ENCODE measurements at regions of chr2 and their contacts with region 1.

Region 1: GRCh38 chr2:64865073-64865830 is 123.9 kb upstream of the SLC1A4 start:
- DNase-seq: peak; percentile 76
- H3K4me3 ChIP-seq: peak overlapping the region; percentile 68 to 77
- H3K27ac ChIP-seq: peak overlapping the region; percentile 32 to 83
- H3K4me1 ChIP-seq: peaks cover 10% of the 10 kb centered on the region
- H3K27me3 ChIP-seq: no peaks in the 10 kb centered on the region
- CTCF ChIP-seq: peak; percentile 94 to 97 (median 95)
- POLR2A ChIP-seq: no peak

Region 2: GRCh38 chr2:63628403-63628942 is 1236.8 kb before region 1 on chr2:
- intact Hi-C with region 1: no loop called
- DNase-seq: no peak
- H3K4me3 ChIP-seq: no peak overlapping the region
- H3K27ac ChIP-seq: no peak overlapping the region
- H3K4me1 ChIP-seq: no peaks in the 10 kb centered on the region
- H3K27me3 ChIP-seq: no peaks in the 10 kb centered on the region
- CTCF ChIP-seq: no peak
- POLR2A ChIP-seq: no peak

Region 3: GRCh38 chr2:64538764-64539433 is 326.4 kb before region 1 on chr2:
- intact Hi-C with region 1: no loop called
- DNase-seq: no peak
- H3K4me3 ChIP-seq: no peak overlapping the region
- H3K27ac ChIP-seq: no peak overlapping the region
- H3K4me1 ChIP-seq: no peaks in the 10 kb centered on the region
- H3K27me3 ChIP-seq: no peaks in the 10 kb centered on the region
- CTCF ChIP-seq: no peak
- POLR2A ChIP-seq: no peak

Region 4: GRCh38 chr2:64594226-64594989 is 270.8 kb before region 1 on chr2:
- intact Hi-C with region 1: loop called (anchors 5 kb)
- DNase-seq: no peak
- H3K4me3 ChIP-seq: no peak overlapping the region
- H3K27ac ChIP-seq: no peak overlapping the region
- H3K4me1 ChIP-seq: peaks cover 3% of the 10 kb centered on the region
- H3K27me3 ChIP-seq: no peaks in the 10 kb centered on the region
- CTCF ChIP-seq: no peak
- POLR2A ChIP-seq: no peak

Region 5: DNA sequence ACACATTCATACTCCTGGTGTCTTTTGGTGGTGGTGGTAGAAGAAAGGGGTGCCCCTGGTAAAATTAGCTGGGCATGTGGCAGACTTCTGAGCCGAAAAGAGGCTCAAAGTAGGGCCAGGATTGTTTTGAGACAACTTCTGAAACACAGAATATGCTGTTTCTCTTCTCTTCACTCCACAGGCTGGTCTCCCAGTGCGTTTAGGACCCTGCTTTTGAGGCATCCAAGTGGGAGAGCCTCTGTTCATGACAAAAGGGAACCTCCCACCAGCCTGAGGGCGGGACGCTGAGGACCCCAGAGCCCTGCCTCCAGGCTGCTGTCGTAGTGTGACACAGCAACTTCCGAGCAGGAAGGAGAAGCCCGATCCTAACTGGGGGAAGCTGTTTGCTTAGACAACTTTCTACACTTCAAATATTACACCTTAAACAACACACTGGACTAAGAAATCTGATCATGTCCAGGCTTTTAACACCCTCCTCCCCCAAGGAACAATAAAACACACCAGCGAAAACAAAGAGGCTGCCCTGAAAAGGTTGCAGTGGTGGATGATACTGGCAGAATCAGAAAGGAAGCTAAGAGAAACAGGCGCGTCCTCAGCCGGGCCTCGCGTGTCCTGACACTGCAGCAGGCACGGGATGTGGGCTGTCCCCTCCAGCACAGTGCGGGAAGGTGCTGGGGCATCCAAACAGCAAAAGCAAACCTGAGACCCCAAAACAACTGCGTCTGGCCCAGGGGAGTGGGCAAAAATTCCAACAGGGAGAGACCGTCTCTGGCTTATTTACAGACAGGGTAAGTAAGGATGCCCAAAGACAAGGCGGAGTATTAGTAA is 220.9 kb before region 1 on chr2:
- intact Hi-C with region 1: loop called (anchors 5 kb)
- DNase-seq: peak; percentile 90
- H3K4me3 ChIP-seq: peak overlapping the region; percentile 29 to 52
- H3K27ac ChIP-seq: peak overlapping the region; percentile 89 to 95
- H3K4me1 ChIP-seq: peaks cover 75% of the 10 kb centered on the region
- H3K27me3 ChIP-seq: no peaks in the 10 kb centered on the region
- CTCF ChIP-seq: no peak
- POLR2A ChIP-seq: no peak

Region 6: DNA sequence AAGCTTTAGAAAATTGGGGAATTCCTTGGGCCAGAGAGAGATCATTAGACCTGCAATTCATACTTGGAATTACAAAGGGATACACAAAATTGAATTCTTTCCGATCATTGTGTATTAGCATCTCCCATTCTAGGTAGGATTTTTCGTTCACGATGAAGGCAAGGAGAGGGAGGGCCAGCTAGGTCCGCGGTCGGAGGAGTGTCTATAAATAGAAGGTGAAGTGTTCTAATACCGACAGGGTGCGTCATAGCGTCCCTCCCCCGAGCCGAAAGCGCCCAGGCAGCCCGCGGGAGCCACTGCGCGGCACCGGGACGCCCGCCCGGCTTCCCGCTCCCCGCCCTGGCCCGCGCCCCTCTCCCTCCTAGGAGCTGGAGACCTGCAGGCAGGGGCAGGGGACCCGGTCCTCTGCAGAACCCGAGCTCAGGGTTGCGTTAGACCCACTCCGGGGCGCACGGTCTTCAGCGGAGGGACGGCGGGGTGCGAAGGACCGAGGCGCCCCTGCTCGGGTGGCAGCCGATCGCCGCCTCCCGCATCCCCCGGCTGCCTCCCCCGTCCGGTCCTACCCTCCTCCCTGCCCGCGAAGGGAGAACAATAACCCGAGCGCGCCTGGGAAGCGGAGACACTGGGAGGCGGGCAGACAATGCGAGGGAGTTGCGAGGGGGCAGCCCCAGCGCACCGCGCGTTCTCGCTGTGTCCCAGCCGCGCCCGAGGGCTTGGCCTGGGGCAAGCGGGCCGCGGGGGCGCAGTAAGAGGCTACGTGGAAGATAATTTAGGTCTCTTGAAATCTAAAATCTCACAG is 97.4 kb before region 1 on chr2:
- intact Hi-C with region 1: loop called (anchors 10 kb)
- DNase-seq: peak; percentile 94
- H3K4me3 ChIP-seq: peak overlapping the region; percentile 65 to 67
- H3K27ac ChIP-seq: peak overlapping the region; percentile 91 to 98
- H3K4me1 ChIP-seq: no peaks in the 10 kb centered on the region
- H3K27me3 ChIP-seq: no peaks in the 10 kb centered on the region
- CTCF ChIP-seq: no peak
- POLR2A ChIP-seq: no peak

Region 7: GRCh38 chr2:64945973-64946768 is 80.9 kb after region 1 on chr2:
- intact Hi-C with region 1: no loop called
- DNase-seq: no peak
- H3K4me3 ChIP-seq: no peak overlapping the region
- H3K27ac ChIP-seq: peak overlapping the region; percentile 13 to 33
- H3K4me1 ChIP-seq: peaks cover 9% of the 10 kb centered on the region
- H3K27me3 ChIP-seq: no peaks in the 10 kb centered on the region
- CTCF ChIP-seq: no peak
- POLR2A ChIP-seq: no peak

Measured in testis (tissue), 5 donors.